Activated T-helper 1 cell treated with anti-CD3 and anti-CD28 coated beads, Interleukin-12 subunit alpha, Interleukin-12 subunit beta, Interleukin-2, Interleukin-4 antibody, amounts not matched to agents 30 ng/mL and 10 ng/mL and 1 ng/mL, durations not matched to agents 14 hours and 24 hours and 36 hours (primary cell): ENCODE measurements at regions of chr2 and their contacts with region 1.

Region 1: DNA sequence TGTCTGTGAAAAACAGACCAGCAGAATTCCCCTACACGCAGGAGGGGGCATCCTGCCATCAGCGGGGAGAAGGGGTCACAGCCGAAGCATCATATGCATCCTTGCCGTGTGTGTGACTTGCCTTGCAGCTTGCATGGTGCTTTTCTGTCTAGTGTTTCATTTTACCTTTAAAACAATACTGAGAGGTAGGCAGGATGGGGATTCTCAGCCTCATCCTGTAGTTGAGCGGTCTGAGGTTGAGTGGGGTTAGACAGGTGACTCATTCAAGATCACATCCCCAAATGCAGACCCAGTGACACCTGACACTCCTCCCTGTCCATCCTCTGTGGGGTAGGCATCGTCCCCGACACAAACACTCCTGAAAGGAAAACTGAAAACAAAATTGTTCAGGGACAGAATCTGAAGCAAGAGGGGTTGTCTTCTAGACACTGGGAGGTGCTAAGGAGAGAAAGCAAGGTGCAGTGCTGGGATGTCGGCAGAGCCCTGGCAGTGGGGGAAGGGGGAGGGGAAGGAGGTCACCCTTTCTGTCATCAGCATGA is 7.9 kb downstream of the ARL4C start:
- DNase-seq: peak; percentile 80
- H3K4me3 Mint-ChIP-seq: peak overlapping the region; percentile 88
- H3K27ac Mint-ChIP-seq: peak overlapping the region; percentile 95
- H3K4me1 Mint-ChIP-seq: peaks cover 92% of the 10 kb centered on the region
- H3K27me3 Mint-ChIP-seq: no peaks in the 10 kb centered on the region

Region 2: DNA sequence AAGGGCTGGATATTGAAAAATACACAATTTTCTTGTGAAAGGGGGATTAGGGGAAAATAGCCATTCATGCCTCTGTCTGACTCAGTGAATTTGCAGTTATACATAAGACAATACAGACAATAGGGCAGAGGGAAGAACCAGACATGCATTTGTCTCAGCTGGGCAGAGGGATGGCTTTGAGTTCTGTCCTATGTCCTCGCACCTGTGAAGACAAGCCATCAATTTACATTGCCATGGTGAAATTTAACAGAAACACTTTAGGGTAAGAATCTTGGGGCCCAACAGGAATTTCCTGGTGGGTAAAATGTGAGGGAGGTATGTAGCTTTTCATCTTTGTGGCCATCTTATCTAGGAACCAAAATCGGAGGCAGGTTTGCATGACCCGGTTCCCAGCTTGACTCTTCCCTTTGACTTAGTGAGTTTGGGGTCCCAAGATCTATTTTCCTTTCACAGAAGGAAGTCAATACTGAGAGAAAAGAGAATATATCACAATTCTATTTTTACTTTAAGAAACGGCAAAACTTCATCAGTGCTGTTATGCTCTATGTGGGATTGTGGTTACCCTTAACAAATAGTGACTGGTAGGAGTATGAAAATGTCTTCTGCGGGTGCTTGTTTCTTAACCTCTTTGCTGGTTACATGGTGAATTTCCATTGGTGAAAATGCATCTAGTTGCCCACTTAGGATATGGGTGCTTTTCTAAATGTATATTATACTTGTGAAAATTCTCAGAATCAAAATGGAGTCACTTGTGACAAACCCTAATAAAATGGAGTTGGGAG is 216.7 kb before region 1 on chr2:
- intact Hi-C with region 1: loop called (anchors 1 kb)
- DNase-seq: no peak
- H3K4me3 Mint-ChIP-seq: peak overlapping the region; percentile 40
- H3K27ac Mint-ChIP-seq: peak overlapping the region; percentile 85
- H3K4me1 Mint-ChIP-seq: peaks cover 80% of the 10 kb centered on the region
- H3K27me3 Mint-ChIP-seq: no peaks in the 10 kb centered on the region

Region 3: DNA sequence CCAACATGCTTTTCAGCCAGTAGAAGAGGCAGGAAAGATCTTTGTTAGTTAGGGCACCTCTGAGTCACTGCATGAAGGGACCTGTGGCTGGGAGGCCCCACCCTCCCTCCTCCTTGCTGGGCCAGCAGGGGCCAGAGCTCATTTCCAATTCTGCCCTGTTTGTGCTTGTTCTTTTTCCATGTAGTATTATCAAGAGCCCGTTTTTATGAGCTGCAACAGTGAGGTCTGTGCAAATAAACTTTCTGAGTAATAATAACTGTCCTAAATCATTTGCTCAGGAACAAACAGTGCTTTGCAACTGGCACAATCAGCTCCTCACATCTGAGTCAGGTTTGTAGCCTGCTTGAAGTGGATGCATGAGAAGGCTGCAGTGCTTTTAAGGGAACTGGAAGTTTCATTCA is 120.1 kb before region 1 on chr2:
- intact Hi-C with region 1: loop called (anchors 2 kb)
- DNase-seq: peak; percentile 35
- H3K4me3 Mint-ChIP-seq: peak overlapping the region; percentile 54
- H3K27ac Mint-ChIP-seq: peak overlapping the region; percentile 84
- H3K4me1 Mint-ChIP-seq: peaks cover 76% of the 10 kb centered on the region
- H3K27me3 Mint-ChIP-seq: no peaks in the 10 kb centered on the region

Region 4: DNA sequence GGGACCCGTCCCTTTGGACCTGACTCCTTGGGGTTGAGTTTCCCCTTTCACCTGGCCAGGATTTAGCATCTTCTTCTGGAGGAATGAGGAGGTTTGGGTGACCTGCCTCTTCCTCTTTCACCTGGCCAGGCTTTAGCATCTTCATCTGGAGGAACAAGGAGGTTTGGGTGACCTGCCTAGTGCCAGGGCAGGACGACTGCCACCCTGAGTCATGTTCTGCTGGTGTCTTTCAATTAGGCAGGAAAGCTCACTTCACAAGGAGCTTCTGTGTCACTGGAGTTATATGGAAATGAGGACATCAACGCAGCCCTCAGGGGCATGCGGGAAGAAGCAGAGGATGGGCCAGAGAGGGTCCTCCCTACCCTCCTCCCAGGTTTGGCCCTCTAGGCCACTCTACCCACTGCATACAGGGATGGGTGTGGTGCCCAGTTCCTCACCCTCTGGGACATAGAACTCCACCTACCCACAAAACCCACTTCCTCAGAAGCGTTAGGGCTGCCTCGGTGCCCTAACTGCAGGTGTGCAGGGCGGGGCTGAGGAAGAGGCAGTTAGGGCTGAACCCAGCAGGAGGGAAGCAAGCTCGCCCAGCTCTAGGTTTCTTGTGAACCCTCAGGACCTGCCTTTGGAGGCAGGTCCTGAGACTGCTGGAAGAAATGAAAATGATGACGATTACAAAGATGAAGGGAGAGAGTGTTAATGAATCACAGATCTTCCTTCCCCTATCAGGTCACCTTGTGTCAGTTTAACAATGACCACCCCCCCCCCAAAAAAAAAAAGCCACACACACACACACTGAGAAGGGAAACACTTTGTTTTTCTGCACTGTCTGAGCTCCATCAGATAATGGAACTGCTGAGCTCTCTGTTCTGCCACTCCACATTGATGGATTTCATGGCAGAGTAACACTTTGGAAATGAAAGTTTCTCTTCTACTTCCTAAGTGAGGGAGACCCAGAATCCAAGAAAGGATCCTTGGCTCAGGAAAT is 63.1 kb before region 1 on chr2:
- intact Hi-C with region 1: loop called (anchors 1 kb)
- DNase-seq: peak; percentile 75
- H3K4me3 Mint-ChIP-seq: peak overlapping the region; percentile 75
- H3K27ac Mint-ChIP-seq: peak overlapping the region; percentile 99
- H3K4me1 Mint-ChIP-seq: peaks cover 77% of the 10 kb centered on the region
- H3K27me3 Mint-ChIP-seq: no peaks in the 10 kb centered on the region

Region 5: DNA sequence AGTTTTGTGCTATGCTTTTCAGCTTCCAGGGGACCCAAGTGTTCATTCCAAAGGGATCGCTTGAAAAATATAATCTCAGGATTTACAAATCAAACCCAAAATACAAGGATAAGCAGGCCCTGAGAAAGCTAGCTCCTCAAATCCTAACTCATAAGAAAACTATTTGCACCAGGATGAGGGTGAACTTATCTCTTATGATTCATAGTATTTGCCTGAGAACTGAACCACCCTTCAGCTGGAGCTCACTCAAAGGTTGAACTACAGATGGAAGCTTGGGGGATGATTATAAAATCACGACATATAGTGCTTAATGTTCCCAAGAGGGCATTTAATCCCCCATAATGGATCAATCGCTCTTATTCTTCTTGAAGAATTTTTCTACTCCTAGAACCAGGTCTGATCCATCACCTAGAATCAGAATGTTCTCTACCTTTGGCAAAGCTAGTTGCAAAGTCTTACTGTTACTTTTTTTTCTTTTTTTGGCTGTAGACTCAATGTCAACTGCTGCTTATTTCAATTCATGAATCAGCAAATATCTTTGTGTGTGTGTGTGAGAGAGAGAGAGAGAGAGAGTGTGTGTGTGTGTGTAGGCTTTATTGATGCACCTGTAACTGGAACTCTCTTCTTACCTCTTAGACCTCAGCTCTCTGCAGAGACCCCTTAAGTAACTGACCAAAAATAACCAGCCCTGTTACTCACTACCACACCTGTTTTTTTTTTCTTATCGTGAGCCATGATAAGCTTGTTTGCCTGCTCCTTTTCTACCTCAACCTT is 36.9 kb before region 1 on chr2:
- intact Hi-C with region 1: loop called (anchors 1 kb)
- DNase-seq: no peak
- H3K4me3 Mint-ChIP-seq: peak overlapping the region; percentile 79
- H3K27ac Mint-ChIP-seq: peak overlapping the region; percentile 90
- H3K4me1 Mint-ChIP-seq: peaks cover 88% of the 10 kb centered on the region
- H3K27me3 Mint-ChIP-seq: peaks cover 2% of the 10 kb centered on the region

Region 6: GRCh38 chr2:234463626-234464290 is 25.2 kb before region 1 on chr2:
- intact Hi-C with region 1: loop called (anchors 1 kb)
- DNase-seq: peak; percentile 68
- H3K4me3 Mint-ChIP-seq: peak overlapping the region; percentile 82
- H3K27ac Mint-ChIP-seq: peak overlapping the region; percentile 90
- H3K4me1 Mint-ChIP-seq: peaks cover 77% of the 10 kb centered on the region
- H3K27me3 Mint-ChIP-seq: no peaks in the 10 kb centered on the region

Region 7: GRCh38 chr2:234474654-234475053 is 14.3 kb before region 1 on chr2:
- intact Hi-C with region 1: loop called (anchors 1 kb)
- DNase-seq: no peak
- H3K4me3 Mint-ChIP-seq: no peak overlapping the region
- H3K27ac Mint-ChIP-seq: peak overlapping the region; percentile 91
- H3K4me1 Mint-ChIP-seq: peaks cover 53% of the 10 kb centered on the region
- H3K27me3 Mint-ChIP-seq: no peaks in the 10 kb centered on the region